Activated CD4-positive, alpha-beta T cell treated with anti-CD3 and anti-CD28 coated beads, Interleukin-2, amount 10 ng/mL, durations not matched to agents 7 days and 5 days (primary cell): ENCODE measurements at regions of chr1 and their contacts with region 1.

Region 1: GRCh38 chr1:108758796-108759195 is 12.3 kb downstream of the STXBP3 start:
- DNase-seq: no peak
- H3K4me3 Mint-ChIP-seq: no peak overlapping the region
- H3K27ac Mint-ChIP-seq: no peak overlapping the region
- H3K4me1 Mint-ChIP-seq: peaks cover 2% of the 10 kb centered on the region
- H3K27me3 Mint-ChIP-seq: no peaks in the 10 kb centered on the region

Region 2: DNA sequence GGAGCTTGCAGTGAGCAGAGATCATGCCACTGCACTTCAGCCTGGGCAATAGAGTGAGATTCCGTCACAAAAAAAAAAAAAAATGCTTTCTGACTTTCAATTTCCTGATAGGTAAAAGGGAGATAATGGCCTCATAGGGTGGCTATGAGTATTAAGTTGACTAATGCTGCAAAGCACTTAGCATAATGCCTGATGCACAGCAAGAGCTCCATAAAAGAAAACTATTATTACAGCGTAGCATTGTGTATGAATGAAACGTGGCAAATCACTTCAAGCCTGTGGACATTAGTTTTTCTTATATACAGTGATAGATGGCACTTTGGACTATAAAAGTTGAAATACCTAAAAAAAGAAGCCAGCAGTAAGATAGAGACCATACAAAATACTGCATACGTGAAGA is 29.3 kb before region 1 on chr1:
- CTCF ChIA-PET with region 1: no interaction called
- POLR2A ChIA-PET with region 1: no interaction called
- DNase-seq: no peak
- H3K4me3 Mint-ChIP-seq: no peak overlapping the region
- H3K27ac Mint-ChIP-seq: no peak overlapping the region
- H3K4me1 Mint-ChIP-seq: no peaks in the 10 kb centered on the region
- H3K27me3 Mint-ChIP-seq: peaks cover 9% of the 10 kb centered on the region

Region 3: GRCh38 chr1:109011335-109011734 is 252.5 kb after region 1 on chr1:
- CTCF ChIA-PET with region 1: no interaction called
- POLR2A ChIA-PET with region 1: interaction called, 13 read pairs
- DNase-seq: no peak
- H3K4me3 Mint-ChIP-seq: no peak overlapping the region
- H3K27ac Mint-ChIP-seq: no peak overlapping the region
- H3K4me1 Mint-ChIP-seq: no peaks in the 10 kb centered on the region
- H3K27me3 Mint-ChIP-seq: no peaks in the 10 kb centered on the region